Breast epithelium (tissue), 4 donors: ENCODE measurements at regions of chr7 and their contacts with region 1.

Region 1: DNA sequence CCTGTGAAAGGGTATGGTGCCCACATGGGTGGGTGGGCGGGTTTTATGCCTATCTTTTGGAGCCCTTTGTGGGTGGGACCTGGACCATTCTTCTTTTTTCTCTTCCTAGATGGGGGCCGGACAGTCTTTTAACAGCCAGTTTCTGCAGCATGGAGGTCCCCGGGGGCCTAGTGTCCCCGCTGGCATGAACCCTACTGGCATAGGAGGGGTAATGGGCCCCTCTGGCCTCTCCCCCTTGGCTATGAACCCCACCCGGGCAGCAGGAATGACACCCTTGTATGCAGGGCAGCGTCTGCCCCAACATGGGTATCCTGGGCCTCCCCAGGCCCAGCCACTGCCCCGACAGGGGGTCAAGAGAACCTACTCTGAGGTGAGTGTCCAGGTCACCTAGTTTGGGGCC is 9.1 kb downstream of the ZMIZ2 start:
- DNase-seq: no peak
- H3K4me3 ChIP-seq: no peak overlapping the region
- H3K27ac ChIP-seq: no peak overlapping the region
- H3K4me1 ChIP-seq: peaks cover 9 to 18% of the 10 kb centered on the region in 2 donors
- H3K27me3 ChIP-seq: no peaks in the 10 kb centered on the region
- CTCF ChIP-seq: no peak
- POLR2A ChIP-seq: no peak

Region 2: DNA sequence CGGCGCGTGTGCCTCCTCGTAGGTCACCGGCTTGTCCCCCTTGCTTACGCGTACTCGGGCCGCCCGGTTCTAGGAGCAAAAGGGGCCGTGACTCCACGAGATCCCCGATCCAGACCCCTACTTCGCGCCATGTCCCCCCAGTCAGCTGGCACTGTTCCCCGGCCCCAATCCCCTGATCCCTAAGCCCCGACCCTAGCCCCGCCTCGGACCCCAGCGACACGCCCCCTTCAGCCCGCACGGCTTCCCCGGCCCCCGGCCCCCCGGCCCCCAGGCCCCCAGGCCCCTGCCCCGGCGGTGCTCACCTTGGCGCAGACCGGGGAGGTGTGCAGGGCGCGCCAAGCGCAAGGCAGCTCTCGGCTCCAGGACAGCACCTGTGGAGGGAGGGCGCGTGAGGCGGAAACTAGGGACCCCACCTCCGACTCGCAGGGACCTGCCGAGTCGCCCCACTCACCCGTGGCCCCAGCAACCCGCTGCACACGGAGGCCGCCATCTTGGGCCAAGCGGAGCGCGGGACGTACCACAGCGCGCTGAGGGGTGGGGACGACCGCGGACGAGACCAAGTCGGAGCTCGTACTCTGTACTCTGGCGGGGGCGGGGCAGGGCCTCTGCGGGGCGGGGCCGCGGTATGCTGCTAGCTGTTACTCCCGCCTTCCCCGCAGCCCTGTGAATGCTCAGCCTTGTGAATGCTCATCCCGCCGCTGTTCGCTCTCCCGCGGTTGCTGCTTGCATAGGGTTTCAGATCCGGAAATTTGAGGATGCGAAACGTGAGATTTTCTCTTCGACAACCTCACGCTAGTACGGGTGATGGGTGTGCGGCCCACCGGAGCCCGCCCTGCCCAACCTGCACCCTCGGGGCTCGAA is 888.5 kb before region 1 on chr7 and contains the start of gene MRPS24:
- intact Hi-C with region 1: no loop called
- DNase-seq: peak; percentile 95
- H3K4me3 ChIP-seq: peak within 1 kb of the TSS; percentile 83 to 94 (median 88)
- H3K27ac ChIP-seq: peak within 1 kb of the TSS; percentile 92 to 96
- H3K4me1 ChIP-seq: no peaks in the 10 kb centered on the region
- H3K27me3 ChIP-seq: no peaks in the 10 kb centered on the region
- CTCF ChIP-seq: no peak
- POLR2A ChIP-seq: peak; percentile 30
- total RNA-seq, gene MRPS24: 75.4 to 86.1 (median 81.0) TPM

Region 3: GRCh38 chr7:44787041-44787440 is 29.3 kb after region 1 on chr7:
- intact Hi-C with region 1: loop called (anchors 1 kb)
- DNase-seq: no peak
- H3K4me3 ChIP-seq: no peak overlapping the region
- H3K27ac ChIP-seq: no peak overlapping the region
- H3K4me1 ChIP-seq: no peaks in the 10 kb centered on the region
- H3K27me3 ChIP-seq: no peaks in the 10 kb centered on the region
- CTCF ChIP-seq: no peak
- POLR2A ChIP-seq: no peak